BJ (cell line): ENCODE measurements at regions of chr11 and their contacts with region 1.

Region 1: DNA sequence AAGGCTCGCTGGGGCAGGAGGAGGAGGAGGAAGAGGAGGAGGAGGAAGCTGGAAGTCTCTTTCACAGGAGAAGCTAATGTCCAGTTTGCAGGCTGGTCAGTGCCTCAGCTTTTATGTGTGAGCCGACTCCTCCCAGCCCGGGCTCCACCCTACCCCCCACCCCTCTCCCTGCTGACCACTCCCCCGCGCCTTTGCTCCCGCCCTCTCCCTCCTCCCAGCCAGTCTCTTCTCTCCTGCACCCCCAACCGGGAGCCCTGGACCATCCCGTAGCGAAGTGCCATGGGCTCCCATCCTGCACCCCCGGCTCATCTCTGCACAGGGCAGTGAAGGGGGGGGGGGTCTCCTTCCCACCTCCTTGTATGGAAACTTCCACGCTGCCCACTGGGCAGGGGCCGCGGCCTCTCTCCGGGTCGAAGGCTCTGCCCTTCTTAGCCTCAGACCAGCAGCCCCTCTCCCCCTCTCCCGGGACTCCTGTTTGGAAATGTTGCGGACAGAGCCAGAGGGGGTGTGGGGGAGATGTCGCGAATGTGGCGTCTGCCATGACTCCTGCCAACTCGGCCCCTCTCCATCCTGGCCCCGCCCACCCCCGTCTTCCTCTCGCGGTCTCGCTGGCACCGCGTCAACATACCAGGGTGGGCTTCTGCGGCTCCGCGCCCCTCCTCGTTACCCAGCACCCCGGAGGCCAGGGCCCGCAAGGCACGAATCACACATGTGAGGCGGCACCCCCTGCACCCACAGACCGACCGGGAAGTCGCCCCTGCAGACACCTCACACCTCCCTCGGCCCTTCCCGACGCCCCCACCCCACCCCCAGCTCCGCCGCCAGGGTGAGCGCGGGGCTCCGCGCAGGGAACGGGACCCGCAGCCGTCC is 1.8 kb downstream of the IGF2 start:
- DNase-seq: peak; percentile 35
- H3K4me3 ChIP-seq: peak overlapping the region; percentile 58
- H3K27me3 ChIP-seq: peaks cover 14% of the 10 kb centered on the region
- CTCF ChIP-seq: no peak

Region 2: DNA sequence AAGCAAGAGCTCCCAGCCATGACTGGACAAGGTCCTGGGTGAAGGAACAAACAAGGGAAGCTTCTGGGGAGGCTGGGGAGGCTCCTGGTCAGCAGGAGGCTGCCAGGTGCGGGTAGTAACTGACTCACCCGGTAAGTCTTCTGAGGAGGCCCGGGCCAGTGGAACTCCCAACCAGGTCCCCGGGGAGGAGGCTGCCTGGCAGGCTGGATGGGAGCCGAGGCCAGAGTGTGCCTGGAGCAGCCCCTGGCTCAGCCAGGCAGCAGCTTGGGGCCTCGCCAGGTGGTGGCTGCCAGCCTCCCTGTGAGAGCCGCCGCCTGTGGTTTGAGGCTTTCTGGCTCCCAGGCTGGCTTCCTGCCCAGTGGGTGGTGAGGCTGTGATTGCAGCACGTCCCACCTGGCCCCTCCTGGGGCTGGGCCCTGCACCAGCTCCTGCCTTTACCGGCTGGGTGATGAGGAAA is 44.5 kb before region 1 on chr11:
- CTCF ChIA-PET with region 1: interaction called, 6 read pairs
- POLR2A ChIA-PET with region 1: interaction called, 11 read pairs
- DNase-seq: no peak
- H3K4me3 ChIP-seq: no peak overlapping the region
- H3K27me3 ChIP-seq: no peaks in the 10 kb centered on the region
- CTCF ChIP-seq: no peak